Colonic mucosa (tissue), 4 donors: ENCODE measurements at regions of chr19 and their contacts with region 1.

Region 1: GRCh38 chr19:50922317-50922853 is 11.2 kb upstream of the KLK4 start:
- DNase-seq: peak; percentile 82
- H3K4me3 ChIP-seq: no peak overlapping the region
- H3K27ac ChIP-seq: no peak overlapping the region
- H3K4me1 ChIP-seq: no peaks in the 10 kb centered on the region
- H3K27me3 ChIP-seq: no peaks in the 10 kb centered on the region
- CTCF ChIP-seq: peak; percentile 91

Region 2: DNA sequence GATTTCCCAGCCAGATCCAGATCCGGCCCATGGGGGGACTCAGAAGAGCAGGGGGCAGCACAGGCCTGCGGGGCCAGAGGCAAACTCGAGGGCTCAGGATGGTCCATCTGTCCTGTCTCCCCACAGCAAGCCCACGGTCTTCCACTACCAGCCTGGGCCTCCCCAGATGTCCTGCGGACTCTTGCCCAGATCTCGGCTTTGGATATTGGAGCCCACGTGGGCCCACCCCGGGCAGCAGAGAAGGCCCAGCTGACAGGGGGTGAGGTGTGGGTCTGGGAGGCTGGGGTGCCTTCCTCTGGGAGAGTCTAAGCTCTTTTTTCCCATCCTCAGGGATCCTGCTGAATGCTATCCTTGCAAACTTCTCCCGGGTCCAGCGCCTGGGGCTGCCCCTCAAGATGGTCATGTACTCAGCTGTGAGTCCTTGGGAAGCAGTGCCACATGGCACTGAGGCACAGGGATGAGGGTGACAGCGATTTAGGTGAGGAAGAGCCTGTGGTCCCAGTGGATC is 128.8 kb before region 1 on chr19:
- intact Hi-C with region 1: loop called (anchors 2 kb)
- DNase-seq: no peak
- H3K4me3 ChIP-seq: no peak overlapping the region
- H3K27ac ChIP-seq: no peak overlapping the region
- H3K4me1 ChIP-seq: no peaks in the 10 kb centered on the region
- H3K27me3 ChIP-seq: no peaks in the 10 kb centered on the region
- CTCF ChIP-seq: no peak